ENCODE measurements at regions of chr17 and their contacts with region 1.

Region 1: GRCh38 chr17:67376737-67377487 is at the start of gene PITPNC1:
- DNase-seq: peak; percentile 71 to 79 (median 73)
- H3K4me3 ChIP-seq: peak within 1 kb of the TSS; percentile 87 to 99 (median 93)
- H3K4me3 Mint-ChIP-seq: peak within 1 kb of the TSS; percentile 90 to 93
- H3K27ac ChIP-seq: peak within 1 kb of the TSS; percentile 83 to 92
- H3K27ac Mint-ChIP-seq: peak within 1 kb of the TSS; percentile 84 to 93 (median 91)
- H3K4me1 ChIP-seq: peaks cover 24 to 25% of the 10 kb centered on the region in 2 donors
- H3K4me1 Mint-ChIP-seq: peaks cover 35% of the 10 kb centered on the region
- H3K27me3 ChIP-seq: no peaks in the 10 kb centered on the region
- H3K27me3 Mint-ChIP-seq: peaks cover 0 to 14% (median 0%) of the 10 kb centered on the region in 3 donors
- CTCF ChIP-seq: no peak
- polyA plus RNA-seq, gene PITPNC1: 18.5 to 31.0 (median 21.7) TPM

Region 2: GRCh38 chr17:67431249-67432048 is 54.5 kb after region 1 on chr17:
- intact Hi-C with region 1: loop called in 1 of 2 experiments (anchors 5 kb)
- DNase-seq: peak; percentile 49 to 73 (median 63)
- H3K4me3 ChIP-seq: peak overlapping the region in 1 of 3 experiments; percentile 0
- H3K4me3 Mint-ChIP-seq: peak overlapping the region in 1 of 2 donors; percentile 44
- H3K27ac ChIP-seq: peak overlapping the region in 1 of 2 donors; percentile 79
- H3K27ac Mint-ChIP-seq: peak overlapping the region; percentile 34 to 89 (median 71)
- H3K4me1 ChIP-seq: peaks cover 55 to 57% of the 10 kb centered on the region in 2 donors
- H3K4me1 Mint-ChIP-seq: peaks cover 52% of the 10 kb centered on the region
- H3K27me3 ChIP-seq: no peaks in the 10 kb centered on the region
- H3K27me3 Mint-ChIP-seq: no peaks in the 10 kb centered on the region
- CTCF ChIP-seq: no peak

Region 3: DNA sequence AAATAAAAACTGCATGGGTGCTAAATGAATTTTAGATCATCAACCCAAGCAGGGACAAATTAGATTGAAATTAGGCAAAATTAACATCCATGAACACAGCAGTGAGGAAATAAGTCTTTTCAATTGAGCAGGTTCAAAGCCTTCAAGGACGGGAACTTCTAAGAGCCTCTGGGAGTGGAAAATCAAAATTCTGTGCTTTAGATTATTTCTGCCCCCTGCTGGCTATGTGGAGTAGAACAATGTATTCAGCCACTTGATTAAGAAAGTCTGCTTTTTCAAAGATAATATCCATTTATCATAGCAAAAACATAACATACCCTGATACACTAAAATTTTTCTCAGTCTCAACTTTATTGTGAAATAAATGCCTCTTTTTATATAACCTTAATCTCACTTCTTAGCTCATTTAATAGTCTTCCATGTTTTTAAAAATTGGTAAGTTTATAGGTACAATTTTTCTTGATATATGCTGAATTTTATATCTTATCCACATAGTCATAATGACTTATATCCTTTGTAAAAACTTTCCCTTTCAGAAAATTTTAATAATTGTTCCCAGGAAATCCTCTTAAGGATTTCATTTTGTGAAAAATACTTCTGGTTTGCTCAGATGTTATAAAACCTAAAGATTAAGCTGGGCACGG is 312.7 kb after region 1 on chr17:
- intact Hi-C with region 1: loop called (anchors 2 to 5 kb)
- DNase-seq: peak; percentile 33 to 63 (median 51)
- H3K4me3 ChIP-seq: no peak overlapping the region
- H3K4me3 Mint-ChIP-seq: no peak overlapping the region
- H3K27ac ChIP-seq: no peak overlapping the region
- H3K27ac Mint-ChIP-seq: no peak overlapping the region
- H3K4me1 ChIP-seq: no peaks in the 10 kb centered on the region
- H3K4me1 Mint-ChIP-seq: peaks cover 13% of the 10 kb centered on the region
- H3K27me3 ChIP-seq: no peaks in the 10 kb centered on the region
- H3K27me3 Mint-ChIP-seq: no peaks in the 10 kb centered on the region
- CTCF ChIP-seq: peak; percentile 86

Region 4: DNA sequence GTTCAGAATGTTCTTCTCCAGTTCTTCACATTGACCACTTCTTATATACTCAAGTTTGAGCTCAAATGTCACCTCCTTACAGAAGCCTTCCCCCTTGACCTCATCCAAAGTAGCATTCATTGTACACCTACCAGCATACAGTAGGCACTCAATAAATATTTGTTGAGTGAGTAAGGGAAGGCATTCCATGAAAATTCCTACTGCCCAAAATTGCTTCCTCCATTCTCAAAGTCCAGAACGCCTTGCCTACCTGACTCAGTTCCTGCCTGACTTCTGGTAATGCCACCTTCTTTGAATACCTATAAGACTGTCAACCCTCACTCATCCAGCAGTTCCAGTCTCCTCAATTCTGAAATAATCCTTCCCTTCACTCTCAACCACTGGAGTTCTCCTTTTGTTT is 433.6 kb after region 1 on chr17:
- intact Hi-C with region 1: no loop called
- DNase-seq: no peak
- H3K4me3 ChIP-seq: no peak overlapping the region
- H3K4me3 Mint-ChIP-seq: no peak overlapping the region
- H3K27ac ChIP-seq: no peak overlapping the region
- H3K27ac Mint-ChIP-seq: no peak overlapping the region
- H3K4me1 ChIP-seq: no peaks in the 10 kb centered on the region
- H3K4me1 Mint-ChIP-seq: peaks cover 3% of the 10 kb centered on the region
- H3K27me3 ChIP-seq: no peaks in the 10 kb centered on the region
- H3K27me3 Mint-ChIP-seq: peaks cover 1 to 5% (median 2%) of the 10 kb centered on the region in 3 donors
- CTCF ChIP-seq: no peak